T-cell (primary cell): ENCODE measurements at regions of chrX and their contacts with region 1.

Region 1: DNA sequence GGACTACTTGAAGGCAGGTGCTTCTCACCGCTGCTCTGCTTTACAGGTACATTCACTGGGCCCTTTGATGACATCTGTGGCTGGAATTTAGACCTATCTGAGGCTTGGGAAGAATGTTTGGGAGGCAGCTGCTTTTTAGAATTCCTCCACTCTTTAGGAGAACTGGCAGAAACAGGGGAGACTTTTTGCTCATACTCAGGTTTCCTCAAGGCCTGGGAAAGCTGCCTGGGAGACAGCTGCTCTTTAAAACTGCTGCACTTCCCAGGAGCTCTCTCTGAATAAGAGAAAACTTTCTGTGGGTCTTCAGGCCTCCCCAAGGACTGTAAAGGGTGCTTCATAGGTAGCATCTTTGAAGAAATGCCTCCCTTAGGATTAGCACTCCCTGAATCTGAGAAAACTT is 14.3 kb downstream of the CT47C1 start:
- DNase-seq: no peak
- ATAC-seq: no peak
- H3K4me3 ChIP-seq: no peak overlapping the region
- H3K4me3 Mint-ChIP-seq: no peak overlapping the region
- H3K27ac ChIP-seq: no peak overlapping the region
- H3K27ac Mint-ChIP-seq: no peak overlapping the region
- H3K4me1 ChIP-seq: no peaks in the 10 kb centered on the region
- H3K4me1 Mint-ChIP-seq: no peaks in the 10 kb centered on the region
- H3K27me3 ChIP-seq: no peaks in the 10 kb centered on the region
- H3K27me3 Mint-ChIP-seq: peaks cover 0 to 33% of the 10 kb centered on the region in 2 donors

Region 2: DNA sequence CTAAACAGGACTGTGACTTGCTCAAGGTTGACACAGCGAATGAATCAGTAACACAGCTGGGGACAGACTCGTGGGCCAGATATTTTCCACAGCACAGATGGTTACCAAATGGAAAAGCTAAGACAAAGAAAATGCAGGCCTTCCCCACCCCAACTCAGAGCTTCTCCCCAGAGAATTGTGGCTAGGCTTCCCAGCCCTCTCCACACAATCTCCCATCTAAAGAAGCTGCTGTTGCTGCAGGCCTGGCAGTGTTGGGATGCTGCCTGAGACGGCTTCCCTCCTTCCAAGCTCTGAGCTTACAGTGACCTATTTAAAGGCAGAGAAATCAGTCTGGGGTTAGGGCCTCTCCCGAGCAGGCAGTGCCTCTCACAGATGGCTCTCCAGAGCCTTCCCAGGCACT is 102.5 kb after region 1 on chrX:
- CTCF ChIA-PET with region 1: no interaction called
- POLR2A ChIA-PET with region 1: interaction called in 1 of 2 experiments, 10 read pairs
- DNase-seq: no peak
- ATAC-seq: no peak
- H3K4me3 ChIP-seq: no peak overlapping the region
- H3K4me3 Mint-ChIP-seq: no peak overlapping the region
- H3K27ac ChIP-seq: no peak overlapping the region
- H3K27ac Mint-ChIP-seq: no peak overlapping the region
- H3K4me1 ChIP-seq: no peaks in the 10 kb centered on the region
- H3K4me1 Mint-ChIP-seq: no peaks in the 10 kb centered on the region
- H3K27me3 ChIP-seq: no peaks in the 10 kb centered on the region
- H3K27me3 Mint-ChIP-seq: peaks cover 0 to 23% of the 10 kb centered on the region in 2 donors